ENCODE measurements at regions of chr10 and their contacts with region 1.

Region 1: DNA sequence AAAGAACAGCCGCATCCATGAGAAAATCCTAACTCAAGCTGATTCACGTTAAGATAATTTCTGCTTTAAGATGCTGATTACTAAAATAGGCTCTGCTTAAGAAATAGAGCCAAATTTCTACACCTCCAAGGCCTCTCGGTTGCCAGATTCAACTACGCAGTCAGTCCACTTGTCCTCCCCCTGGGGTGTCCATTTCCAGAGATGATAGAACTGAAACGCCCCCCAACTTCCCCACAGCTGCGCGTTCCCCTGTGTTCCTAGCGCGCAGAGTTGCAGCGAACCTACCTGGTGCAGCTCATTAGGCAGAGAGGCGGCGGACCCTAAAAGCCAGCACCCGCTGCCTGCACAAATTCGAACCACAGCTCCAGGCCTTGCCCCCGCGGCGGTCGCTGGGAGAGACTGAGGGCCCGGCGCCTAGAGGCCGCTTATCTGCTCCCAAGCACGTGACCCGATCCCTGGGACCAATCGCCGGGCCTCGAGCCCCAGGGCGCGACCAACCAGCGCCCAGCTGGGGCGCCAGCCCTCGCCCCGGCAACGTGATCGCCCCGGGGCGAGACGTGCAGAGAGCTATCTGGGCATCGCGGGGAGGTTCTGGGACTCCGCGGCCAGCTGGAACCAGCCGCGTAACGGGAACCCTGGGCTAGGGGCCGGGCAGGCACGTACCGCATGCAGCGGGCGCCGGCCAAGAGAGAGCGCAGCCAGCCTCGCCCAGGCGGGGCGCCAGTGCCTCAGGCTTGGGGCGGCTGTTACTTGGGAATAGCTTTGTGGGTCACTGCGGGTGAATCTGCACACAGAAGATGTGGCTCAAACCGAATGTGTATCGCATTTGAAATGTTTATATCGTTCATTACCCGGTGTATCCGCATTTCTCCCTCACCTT is at the start of gene PPP1R3C:
- DNase-seq: peak; percentile 90 to 96 (median 92)
- ATAC-seq: peak; percentile 95 to 98 (median 96)
- H3K4me3 ChIP-seq: peak within 1 kb of the TSS; percentile 52 to 78 (median 66)
- H3K27ac ChIP-seq: peak within 1 kb of the TSS; percentile 30 to 91 (median 86)
- H3K4me1 ChIP-seq: peaks cover 0 to 36% (median 7%) of the 10 kb centered on the region in 12 donors
- H3K27me3 ChIP-seq: peaks cover 0 to 20% (median 0%) of the 10 kb centered on the region in 9 donors
- CTCF ChIP-seq: peak in 9 of 12 donors; percentile 8 to 54 (median 34)
- POLR2A ChIP-seq: peak; percentile 62 to 97
- total RNA-seq, gene PPP1R3C: 38.0 to 270 (median 150) TPM

Region 2: DNA sequence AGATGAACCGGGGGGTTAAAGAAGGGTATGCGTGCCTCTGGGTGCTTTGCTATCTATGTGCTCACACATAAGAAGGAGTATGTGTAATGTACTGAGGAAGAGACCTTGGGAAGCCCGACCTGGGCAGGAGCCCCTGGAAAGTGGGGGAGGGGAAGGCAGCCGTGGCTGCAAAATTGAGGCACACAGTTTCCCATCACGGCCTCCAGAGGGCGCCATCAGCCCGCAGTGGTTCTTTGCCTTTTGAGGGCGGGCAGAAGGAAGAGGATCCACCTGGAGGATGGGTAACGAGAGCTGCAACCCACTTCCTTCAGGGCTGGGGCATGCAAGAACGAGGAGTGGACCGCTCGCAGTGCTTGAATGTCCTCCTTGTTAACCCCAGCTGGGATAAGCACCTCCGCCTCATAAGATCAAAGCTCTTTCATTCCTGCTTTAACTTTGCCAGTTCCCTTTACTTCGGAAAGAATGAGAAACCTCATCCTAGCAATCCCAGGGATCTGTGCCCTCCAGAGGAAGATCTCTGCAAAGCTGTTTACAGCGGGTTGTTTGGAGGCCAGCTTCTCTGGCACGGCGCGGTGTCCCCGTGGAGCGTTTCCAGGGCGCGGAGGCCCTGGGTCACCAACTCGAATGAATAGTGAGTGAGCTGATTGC is 334.6 kb before region 1 on chr10:
- intact Hi-C with region 1: loop called in 5 of 10 experiments (anchors 2 to 10 kb)
- DNase-seq: peak; percentile 62 to 84 (median 69)
- ATAC-seq: peak; percentile 74 to 89 (median 88)
- H3K4me3 ChIP-seq: peak overlapping the region in 11 of 12 donors; percentile 6 to 62 (median 47)
- H3K27ac ChIP-seq: peak overlapping the region in 2 of 12 donors; percentile 37
- H3K4me1 ChIP-seq: peaks cover 0 to 10% (median 4%) of the 10 kb centered on the region in 12 donors
- H3K27me3 ChIP-seq: peaks cover 0 to 5% (median 0%) of the 10 kb centered on the region in 9 donors
- CTCF ChIP-seq: peak; percentile 81 to 96 (median 93)
- POLR2A ChIP-seq: no peak

Region 3: GRCh38 chr10:91409869-91410637 is 222.9 kb before region 1 on chr10 and contains the start of gene HECTD2:
- intact Hi-C with region 1: loop called in 4 of 10 experiments (anchors 5 to 10 kb)
- DNase-seq: peak; percentile 83 to 92 (median 88)
- ATAC-seq: peak; percentile 33 to 90 (median 79)
- H3K4me3 ChIP-seq: peak within 1 kb of the TSS; percentile 67 to 99 (median 84)
- H3K27ac ChIP-seq: peak within 1 kb of the TSS; percentile 96 to 100 (median 99)
- H3K4me1 ChIP-seq: peaks cover 0 to 22% (median 8%) of the 10 kb centered on the region in 12 donors
- H3K27me3 ChIP-seq: no peaks in the 10 kb centered on the region
- CTCF ChIP-seq: peak in 10 of 12 donors; percentile 22 to 70 (median 46)
- POLR2A ChIP-seq: no peak
- total RNA-seq, gene HECTD2: 2.3 to 9.3 (median 4.4) TPM

Region 4: GRCh38 chr10:91551856-91552255 is 81.1 kb before region 1 on chr10:
- intact Hi-C with region 1: loop called (anchors 1 to 5 kb)
- DNase-seq: peak in 4 of 5 donors; percentile 49 to 66 (median 54)
- ATAC-seq: peak; percentile 72 to 87 (median 81)
- H3K4me3 ChIP-seq: peak overlapping the region in 8 of 12 donors; percentile 21 to 49 (median 33)
- H3K27ac ChIP-seq: peak overlapping the region in 6 of 12 donors; percentile 18 to 73 (median 44)
- H3K4me1 ChIP-seq: peaks cover 0 to 21% (median 4%) of the 10 kb centered on the region in 12 donors
- H3K27me3 ChIP-seq: no peaks in the 10 kb centered on the region
- CTCF ChIP-seq: peak; percentile 39 to 86 (median 65)
- POLR2A ChIP-seq: no peak

Region 5: GRCh38 chr10:91590142-91590903 is 42.6 kb before region 1 on chr10:
- intact Hi-C with region 1: loop called in 7 of 10 experiments (anchors 2 to 5 kb)
- DNase-seq: peak in 4 of 5 donors; percentile 61 to 78 (median 68)
- ATAC-seq: peak; percentile 4 to 52 (median 28)
- H3K4me3 ChIP-seq: no peak overlapping the region
- H3K27ac ChIP-seq: peak overlapping the region; percentile 63 to 96 (median 88)
- H3K4me1 ChIP-seq: peaks cover 6 to 80% (median 62%) of the 10 kb centered on the region in 12 donors
- H3K27me3 ChIP-seq: no peaks in the 10 kb centered on the region
- CTCF ChIP-seq: no peak
- POLR2A ChIP-seq: no peak

Region 6: GRCh38 chr10:91694170-91694794 is 61.4 kb after region 1 on chr10:
- intact Hi-C with region 1: loop called in 2 of 10 experiments (anchors 5 kb)
- DNase-seq: no peak
- ATAC-seq: no peak
- H3K4me3 ChIP-seq: no peak overlapping the region
- H3K27ac ChIP-seq: no peak overlapping the region
- H3K4me1 ChIP-seq: peaks cover 0 to 8% (median 1%) of the 10 kb centered on the region in 12 donors
- H3K27me3 ChIP-seq: peaks cover 0 to 2% (median 0%) of the 10 kb centered on the region in 9 donors
- CTCF ChIP-seq: peak; percentile 40 to 70 (median 57)
- POLR2A ChIP-seq: no peak

Region 7: DNA sequence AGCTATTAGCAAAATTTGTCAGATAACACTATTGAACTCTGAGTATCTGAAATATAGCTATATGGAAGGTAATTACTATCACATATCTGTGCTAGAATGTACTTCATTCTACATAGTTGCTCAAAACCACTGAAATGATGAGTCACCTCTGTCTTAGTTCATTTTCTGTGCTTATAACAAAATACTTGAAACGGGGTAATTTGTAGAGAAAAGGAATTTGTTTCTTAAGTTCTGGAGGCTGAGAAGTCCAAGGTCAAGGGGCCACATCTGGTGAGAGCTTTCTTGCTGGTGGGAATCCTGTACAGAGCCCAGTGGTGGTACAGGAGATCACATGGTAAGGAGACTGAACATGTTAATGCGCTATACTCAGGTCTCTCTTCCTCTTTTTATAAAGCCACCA is 123.4 kb after region 1 on chr10:
- intact Hi-C with region 1: no loop called
- DNase-seq: no peak
- ATAC-seq: no peak
- H3K4me3 ChIP-seq: no peak overlapping the region
- H3K27ac ChIP-seq: no peak overlapping the region
- H3K4me1 ChIP-seq: no peaks in the 10 kb centered on the region
- H3K27me3 ChIP-seq: no peaks in the 10 kb centered on the region
- CTCF ChIP-seq: no peak
- POLR2A ChIP-seq: no peak

Region 8: GRCh38 chr10:91908337-91909116 is 275.6 kb after region 1 on chr10:
- intact Hi-C with region 1: loop called in 1 of 10 experiments (anchors 10 kb)
- DNase-seq: peak; percentile 70 to 87 (median 82)
- ATAC-seq: peak; percentile 91 to 97 (median 97)
- H3K4me3 ChIP-seq: peak overlapping the region; percentile 55 to 94 (median 80)
- H3K27ac ChIP-seq: peak overlapping the region in 11 of 12 donors; percentile 64 to 83 (median 79)
- H3K4me1 ChIP-seq: peaks cover 0 to 23% (median 8%) of the 10 kb centered on the region in 12 donors
- H3K27me3 ChIP-seq: peaks cover 0 to 4% (median 0%) of the 10 kb centered on the region in 9 donors
- CTCF ChIP-seq: peak; percentile 14 to 74 (median 40)
- POLR2A ChIP-seq: no peak

Measured in heart left ventricle (tissue), 16 donors.